Activated CD8-positive, alpha-beta T cell treated with anti-CD3 and anti-CD28 coated beads for 36 hours (primary cell): ENCODE measurements at regions of chr2 and their contacts with region 1.

Region 1: DNA sequence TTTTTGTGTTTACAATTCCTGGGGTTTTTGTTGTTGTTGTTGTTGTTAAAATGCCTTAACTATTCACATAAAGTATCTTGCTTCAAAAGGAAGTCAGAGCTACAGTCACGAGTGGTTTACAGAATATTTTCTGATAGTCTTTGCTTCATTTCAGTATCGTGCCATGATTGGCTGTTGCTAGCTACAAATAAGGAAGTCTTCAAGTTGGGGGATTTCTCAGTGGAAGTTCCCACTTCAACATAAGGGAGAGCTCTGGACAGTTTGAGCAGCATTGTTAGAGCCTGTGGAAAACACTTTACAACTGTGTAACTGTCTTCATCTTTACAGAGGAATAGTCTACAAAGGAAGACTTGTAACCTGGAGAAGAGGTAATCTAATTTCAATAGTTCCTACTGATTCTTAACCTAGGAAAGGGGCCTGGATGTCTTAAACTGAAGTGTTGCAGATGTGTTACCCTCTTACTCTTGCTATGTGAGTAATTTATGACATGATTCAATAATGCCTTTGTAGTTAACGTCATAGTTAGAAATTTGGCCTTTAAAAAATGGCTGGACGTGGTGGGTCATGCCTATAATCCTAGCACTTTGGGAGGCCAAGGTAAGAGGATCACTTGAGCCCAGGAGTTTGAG is 23.4 kb upstream of the TANK start:
- DNase-seq: peak; percentile 40
- ATAC-seq: peak; percentile 90
- H3K4me3 Mint-ChIP-seq: peak overlapping the region; percentile 85
- H3K27ac Mint-ChIP-seq: peak overlapping the region; percentile 99
- H3K4me1 Mint-ChIP-seq: peaks cover 46% of the 10 kb centered on the region
- H3K27me3 Mint-ChIP-seq: no peaks in the 10 kb centered on the region
- CTCF ChIP-seq: no peak

Region 2: DNA sequence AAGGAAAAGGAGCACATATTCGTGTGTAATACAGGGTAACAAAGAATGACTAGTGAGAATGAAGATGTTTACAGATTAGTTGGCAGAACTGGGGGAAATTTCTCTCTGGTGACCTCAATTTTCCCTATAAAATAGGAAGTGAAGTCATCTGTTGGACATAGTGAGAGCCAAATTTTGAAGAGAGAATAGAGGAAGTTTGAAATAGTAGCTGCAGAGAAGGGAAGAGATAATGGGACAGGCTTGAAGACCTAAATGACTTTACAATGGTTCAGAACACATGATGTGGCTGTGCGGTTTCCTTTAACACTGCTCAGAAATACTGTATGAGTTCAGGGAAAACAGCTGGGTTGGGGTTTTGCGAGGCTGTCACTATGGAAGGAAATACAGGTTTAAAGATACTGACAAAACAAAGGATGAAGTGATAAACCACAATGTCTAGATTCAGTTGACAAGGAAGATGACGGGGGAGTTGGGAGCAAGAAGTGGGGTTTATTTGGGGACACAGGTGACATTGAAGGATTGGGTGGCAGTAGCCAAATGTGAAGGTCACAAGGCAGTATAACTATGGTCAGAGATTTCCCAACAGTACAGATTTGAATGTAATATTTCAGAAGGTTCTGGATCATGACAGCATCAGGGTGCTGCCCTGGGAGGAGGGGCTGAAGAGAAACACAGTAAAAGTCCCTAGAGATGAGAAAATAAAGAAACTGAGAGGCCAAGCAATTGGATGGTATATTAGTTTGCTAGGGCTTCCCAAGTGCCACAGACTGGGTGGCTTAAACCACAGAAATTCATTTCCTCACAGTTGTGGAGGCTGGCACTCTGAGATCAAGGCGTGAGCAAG is 59.2 kb before region 1 on chr2:
- CTCF ChIA-PET with region 1: no interaction called
- POLR2A ChIA-PET with region 1: interaction called, 3 read pairs
- intact Hi-C with region 1: loop called (anchors 1 kb)
- DNase-seq: peak; percentile 92
- ATAC-seq: peak; percentile 85
- H3K4me3 Mint-ChIP-seq: peak overlapping the region; percentile 25
- H3K27ac Mint-ChIP-seq: peak overlapping the region; percentile 87
- H3K4me1 Mint-ChIP-seq: peaks cover 47% of the 10 kb centered on the region
- H3K27me3 Mint-ChIP-seq: no peaks in the 10 kb centered on the region
- CTCF ChIP-seq: no peak

Region 3: DNA sequence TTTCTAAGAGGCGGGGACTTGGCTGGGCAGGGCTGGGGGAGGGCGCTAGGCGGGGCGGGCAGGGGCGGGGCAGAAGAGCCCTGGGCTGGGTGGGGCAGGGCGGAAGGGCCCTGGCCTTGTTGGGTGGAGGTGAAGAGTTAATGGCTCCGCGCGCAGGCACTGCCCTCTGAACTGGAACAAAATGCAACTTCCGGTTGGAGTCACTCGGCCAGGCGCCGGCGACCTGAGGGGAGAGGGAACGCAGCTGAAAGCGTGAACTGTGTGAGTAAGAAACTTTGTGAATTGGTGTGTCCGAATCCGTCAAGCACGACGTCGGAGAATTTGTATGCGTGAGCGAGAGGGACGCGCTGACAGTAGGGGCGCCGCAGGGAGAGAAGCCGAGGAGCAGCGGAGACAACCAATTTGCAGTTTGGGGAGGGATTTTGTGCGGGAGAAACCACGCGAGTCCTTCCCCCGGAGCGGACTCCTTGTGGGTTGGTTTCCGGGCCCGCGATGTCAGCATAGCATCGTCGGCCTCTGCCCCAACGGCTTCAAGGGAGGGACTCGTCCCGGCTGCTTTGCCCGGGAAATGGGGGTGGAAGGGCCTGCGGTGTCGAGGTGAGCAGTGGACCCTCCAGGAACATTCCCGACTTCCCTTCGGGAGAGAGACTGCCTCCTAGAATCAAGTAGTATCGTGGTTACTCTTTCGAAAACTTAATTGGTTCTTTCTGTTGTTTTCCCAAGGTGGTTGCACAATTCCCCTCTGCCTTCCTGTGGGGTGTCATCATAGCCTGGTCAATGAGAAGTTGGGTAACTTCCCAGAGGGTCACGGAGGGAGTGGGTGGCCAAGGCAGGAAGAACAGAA is 23.6 kb after region 1 on chr2 and contains the start of gene TANK:
- CTCF ChIA-PET with region 1: interaction called, 3 read pairs
- POLR2A ChIA-PET with region 1: interaction called, 5 read pairs
- intact Hi-C with region 1: loop called (anchors 2 kb)
- DNase-seq: peak; percentile 94
- ATAC-seq: peak; percentile 97
- H3K4me3 Mint-ChIP-seq: peak within 1 kb of the TSS; percentile 91
- H3K27ac Mint-ChIP-seq: peak within 1 kb of the TSS; percentile 96
- H3K4me1 Mint-ChIP-seq: peaks cover 53% of the 10 kb centered on the region
- H3K27me3 Mint-ChIP-seq: no peaks in the 10 kb centered on the region
- CTCF ChIP-seq: no peak
- total RNA-seq, gene TANK: 49.2 to 51.6 TPM

Region 4: GRCh38 chr2:161166538-161167409 is 30.0 kb after region 1 on chr2:
- CTCF ChIA-PET with region 1: interaction called, 3 read pairs
- POLR2A ChIA-PET with region 1: interaction called, 3 read pairs
- intact Hi-C with region 1: loop called (anchors 2 kb)
- DNase-seq: peak; percentile 87
- ATAC-seq: peak; percentile 89
- H3K4me3 Mint-ChIP-seq: peak overlapping the region; percentile 47
- H3K27ac Mint-ChIP-seq: peak overlapping the region; percentile 92
- H3K4me1 Mint-ChIP-seq: peaks cover 90% of the 10 kb centered on the region
- H3K27me3 Mint-ChIP-seq: no peaks in the 10 kb centered on the region
- CTCF ChIP-seq: no peak

Region 5: GRCh38 chr2:161217597-161218185 is 80.9 kb after region 1 on chr2:
- CTCF ChIA-PET with region 1: no interaction called
- POLR2A ChIA-PET with region 1: no interaction called
- intact Hi-C with region 1: no loop called
- DNase-seq: no peak
- ATAC-seq: peak; percentile 10
- H3K4me3 Mint-ChIP-seq: no peak overlapping the region
- H3K27ac Mint-ChIP-seq: peak overlapping the region; percentile 22
- H3K4me1 Mint-ChIP-seq: peaks cover 30% of the 10 kb centered on the region
- H3K27me3 Mint-ChIP-seq: no peaks in the 10 kb centered on the region
- CTCF ChIP-seq: no peak

Region 6: GRCh38 chr2:161273038-161273760 is 136.4 kb after region 1 on chr2:
- CTCF ChIA-PET with region 1: no interaction called
- POLR2A ChIA-PET with region 1: no interaction called
- intact Hi-C with region 1: no loop called
- DNase-seq: peak; percentile 34
- ATAC-seq: peak; percentile 73
- H3K4me3 Mint-ChIP-seq: no peak overlapping the region
- H3K27ac Mint-ChIP-seq: no peak overlapping the region
- H3K4me1 Mint-ChIP-seq: no peaks in the 10 kb centered on the region
- H3K27me3 Mint-ChIP-seq: peaks cover 4% of the 10 kb centered on the region
- CTCF ChIP-seq: peak; percentile 90